PC-3 (cell line): ENCODE measurements at regions of chr1 and their contacts with region 1.

Region 1: DNA sequence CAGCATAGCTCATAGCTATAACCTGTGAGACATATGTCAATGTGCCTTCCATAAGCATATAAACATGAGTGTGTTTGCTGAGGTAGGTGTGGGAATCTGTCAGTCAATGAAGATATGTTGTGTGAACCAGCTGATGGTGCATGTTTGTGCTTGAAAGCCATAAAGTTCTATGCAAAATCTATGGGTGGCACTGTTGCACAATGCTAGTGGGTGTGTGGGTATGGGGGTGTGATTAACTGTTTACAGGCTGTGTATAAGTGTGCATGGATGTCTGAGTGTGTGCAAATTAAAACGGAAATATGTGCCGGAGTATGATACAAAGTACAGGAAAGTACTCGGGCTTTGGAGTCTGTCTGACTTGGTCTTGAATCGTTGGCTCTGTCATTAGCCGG is 1.0 kb upstream of the ATP2B4 start:
- DNase-seq: peak; percentile 73
- ATAC-seq: peak; percentile 44
- H3K4me3 ChIP-seq: no peak overlapping the region
- H3K27ac ChIP-seq: peak overlapping the region; percentile 61
- H3K4me1 ChIP-seq: peaks cover 27% of the 10 kb centered on the region
- H3K27me3 ChIP-seq: no peaks in the 10 kb centered on the region
- CTCF ChIP-seq: peak; percentile 64

Region 2: DNA sequence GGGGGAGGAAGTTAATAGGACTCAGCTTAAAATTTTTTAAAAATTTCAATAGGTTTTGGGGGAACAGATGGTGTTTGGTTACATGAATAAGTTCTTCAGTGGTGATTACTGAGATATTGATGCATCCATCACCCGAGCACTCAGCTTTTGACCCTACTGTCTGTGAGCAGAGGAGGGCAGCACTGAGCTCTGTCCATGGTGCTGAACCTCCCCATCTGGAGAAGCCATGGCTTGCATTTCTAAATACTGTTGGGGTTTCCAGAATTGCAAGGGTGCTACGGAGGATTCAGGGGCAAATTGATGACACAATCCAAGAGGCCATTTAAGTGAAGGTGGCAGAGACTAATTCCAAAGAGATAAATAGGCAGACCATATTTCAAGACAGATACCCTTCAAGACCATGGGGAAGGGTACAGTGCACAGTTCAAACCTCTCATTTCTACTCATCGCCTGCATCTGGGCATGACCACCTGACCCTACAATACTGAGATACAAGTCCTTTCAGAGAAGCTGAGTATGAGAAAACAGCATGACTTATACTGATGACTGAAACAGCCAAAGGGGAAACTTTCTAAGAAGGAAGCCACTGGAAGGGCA is 932.6 kb before region 1 on chr1:
- CTCF ChIA-PET with region 1: no interaction called
- POLR2A ChIA-PET with region 1: no interaction called
- intact Hi-C with region 1: no loop called
- DNase-seq: peak; percentile 61
- ATAC-seq: peak; percentile 68
- H3K4me3 ChIP-seq: no peak overlapping the region
- H3K27ac ChIP-seq: no peak overlapping the region
- H3K4me1 ChIP-seq: no peaks in the 10 kb centered on the region
- H3K27me3 ChIP-seq: peaks cover 23% of the 10 kb centered on the region; the same call in 1 of the 2 replicates
- CTCF ChIP-seq: no peak

Region 3: DNA sequence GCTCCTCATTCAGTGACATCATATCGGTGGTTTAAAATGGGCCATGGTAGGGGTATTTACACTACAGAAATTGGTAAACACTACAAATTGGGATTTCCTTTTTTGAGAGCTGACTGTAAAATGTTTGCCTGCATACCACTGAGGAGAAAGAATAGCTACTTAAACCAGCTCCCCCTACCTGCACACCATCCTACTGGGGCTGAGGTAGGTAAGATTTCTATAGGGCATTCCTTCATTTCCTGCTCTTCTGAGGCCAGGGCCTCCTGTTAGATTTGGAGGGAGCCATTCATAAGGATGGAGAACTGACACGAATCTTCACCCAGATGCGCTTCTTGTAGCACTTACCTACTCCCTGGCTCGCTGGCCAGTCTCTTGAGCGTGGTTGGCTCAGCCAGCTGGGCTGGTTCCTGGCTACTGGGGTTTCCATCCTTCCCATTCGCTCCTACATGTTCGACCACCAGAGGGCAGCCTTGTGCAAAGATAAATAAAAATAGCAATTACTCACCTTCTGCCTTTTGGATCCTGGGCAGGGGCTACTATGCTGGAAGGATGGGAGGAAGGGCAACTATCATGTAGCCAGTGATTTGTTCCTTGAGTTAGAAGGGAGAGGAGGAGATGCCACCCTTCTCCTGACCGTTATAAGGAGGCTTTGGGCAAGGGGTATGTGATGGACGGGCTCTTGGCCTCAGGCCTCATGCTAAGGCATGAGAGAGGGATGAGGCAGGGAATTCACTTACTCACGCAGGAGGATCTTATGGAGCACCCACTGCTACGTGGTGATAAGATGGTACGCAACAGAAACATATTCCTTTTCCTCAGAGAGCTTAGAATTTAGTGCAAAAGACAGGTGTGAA is 121.0 kb before region 1 on chr1:
- CTCF ChIA-PET with region 1: interaction called, 5 read pairs
- POLR2A ChIA-PET with region 1: no interaction called
- intact Hi-C with region 1: loop called (anchors 1 kb)
- DNase-seq: peak; percentile 94
- ATAC-seq: peak; percentile 91
- H3K4me3 ChIP-seq: peak overlapping the region; percentile 14; the same call in 1 of the 2 replicates
- H3K27ac ChIP-seq: no peak overlapping the region
- H3K4me1 ChIP-seq: peaks cover 20% of the 10 kb centered on the region; the same call in 1 of the 2 replicates
- H3K27me3 ChIP-seq: no peaks in the 10 kb centered on the region
- CTCF ChIP-seq: peak; percentile 96

Region 4: DNA sequence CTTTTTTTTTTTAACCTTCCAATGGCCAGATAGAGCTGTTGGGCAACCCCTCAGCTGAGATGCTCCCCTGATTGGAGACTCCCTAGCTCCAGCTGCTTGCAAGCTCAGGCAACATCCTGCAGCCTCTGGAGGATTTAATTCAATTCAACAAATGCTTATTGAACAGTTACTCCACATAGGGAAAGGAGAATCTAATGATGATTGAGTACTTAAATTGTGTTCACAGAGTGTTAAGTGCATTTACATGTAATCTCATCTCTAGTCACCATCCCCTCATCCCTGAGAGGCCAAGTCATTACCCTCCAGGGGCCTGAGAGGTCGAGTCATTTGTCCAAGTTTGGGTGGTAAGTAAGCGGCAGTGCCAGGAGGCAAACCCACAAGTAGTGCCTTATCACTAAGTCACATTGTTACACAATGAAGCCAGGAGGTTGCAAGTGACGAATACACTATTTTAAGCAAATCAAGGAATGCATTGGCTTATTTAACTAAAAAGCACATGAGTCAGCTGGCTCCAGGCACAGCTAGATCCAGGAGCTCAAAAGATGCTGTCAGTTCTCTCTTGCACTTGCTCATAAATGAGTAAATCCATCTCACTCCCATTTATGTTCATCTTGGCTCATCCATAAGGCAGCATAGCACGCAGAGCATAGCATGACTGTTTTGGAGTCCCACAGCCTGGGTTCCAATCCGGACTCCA is 67.4 kb before region 1 on chr1:
- CTCF ChIA-PET with region 1: no interaction called
- POLR2A ChIA-PET with region 1: interaction called, 4 read pairs
- intact Hi-C with region 1: loop called (anchors 1 kb)
- DNase-seq: peak; percentile 99
- ATAC-seq: peak; percentile 77
- H3K4me3 ChIP-seq: peak overlapping the region; percentile 27; the same call in 1 of the 2 replicates
- H3K27ac ChIP-seq: peak overlapping the region; percentile 97
- H3K4me1 ChIP-seq: peaks cover 49% of the 10 kb centered on the region
- H3K27me3 ChIP-seq: no peaks in the 10 kb centered on the region
- CTCF ChIP-seq: no peak

Region 5: GRCh38 chr1:203600782-203601736 is 24.6 kb before region 1 on chr1:
- CTCF ChIA-PET with region 1: interaction called, 5 read pairs
- POLR2A ChIA-PET with region 1: interaction called, 40 read pairs
- intact Hi-C with region 1: loop called (anchors 2 kb)
- DNase-seq: no peak
- ATAC-seq: no peak
- H3K4me3 ChIP-seq: no peak overlapping the region
- H3K27ac ChIP-seq: no peak overlapping the region
- H3K4me1 ChIP-seq: peaks cover 9% of the 10 kb centered on the region
- H3K27me3 ChIP-seq: no peaks in the 10 kb centered on the region
- CTCF ChIP-seq: no peak

Region 6: DNA sequence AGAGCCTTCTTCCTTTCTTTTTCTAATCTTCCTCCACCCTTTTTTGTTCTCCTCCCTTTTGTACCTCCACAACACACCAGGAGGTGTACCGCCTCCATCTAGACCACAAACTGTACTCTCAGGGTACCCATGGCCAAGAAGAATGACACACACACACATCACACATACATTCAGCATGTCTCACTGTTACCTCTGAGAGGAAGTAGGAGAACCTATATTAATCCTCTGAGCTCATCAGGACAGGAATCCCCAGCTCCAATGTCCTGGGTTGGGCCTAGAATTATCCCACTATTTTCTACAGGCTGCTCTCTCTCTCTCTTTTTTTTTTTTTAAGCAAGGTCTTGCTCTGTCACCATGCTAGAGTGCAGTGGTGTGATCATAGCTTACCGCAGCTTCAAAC is 37.7 kb after region 1 on chr1:
- CTCF ChIA-PET with region 1: interaction called, 4 read pairs
- POLR2A ChIA-PET with region 1: interaction called, 18 read pairs
- intact Hi-C with region 1: no loop called
- DNase-seq: peak; percentile 99
- ATAC-seq: peak; percentile 98
- H3K4me3 ChIP-seq: peak overlapping the region; percentile 31; the same call in 1 of the 2 replicates
- H3K27ac ChIP-seq: peak overlapping the region; percentile 95
- H3K4me1 ChIP-seq: peaks cover 36% of the 10 kb centered on the region
- H3K27me3 ChIP-seq: no peaks in the 10 kb centered on the region
- CTCF ChIP-seq: 0 out of 2 replicates have a peak, but pooled peaks have one; percentile 29

Region 7: GRCh38 chr1:203692565-203693470 is 67.2 kb after region 1 on chr1:
- CTCF ChIA-PET with region 1: interaction called, 9 read pairs
- POLR2A ChIA-PET with region 1: interaction called, 10 read pairs
- intact Hi-C with region 1: loop called (anchors 1 kb)
- DNase-seq: peak; percentile 93
- ATAC-seq: peak; percentile 87
- H3K4me3 ChIP-seq: no peak overlapping the region; the same call in 1 of the 2 replicates
- H3K27ac ChIP-seq: peak overlapping the region; percentile 99
- H3K4me1 ChIP-seq: peaks cover 26% of the 10 kb centered on the region
- H3K27me3 ChIP-seq: no peaks in the 10 kb centered on the region
- CTCF ChIP-seq: no peak

Region 8: DNA sequence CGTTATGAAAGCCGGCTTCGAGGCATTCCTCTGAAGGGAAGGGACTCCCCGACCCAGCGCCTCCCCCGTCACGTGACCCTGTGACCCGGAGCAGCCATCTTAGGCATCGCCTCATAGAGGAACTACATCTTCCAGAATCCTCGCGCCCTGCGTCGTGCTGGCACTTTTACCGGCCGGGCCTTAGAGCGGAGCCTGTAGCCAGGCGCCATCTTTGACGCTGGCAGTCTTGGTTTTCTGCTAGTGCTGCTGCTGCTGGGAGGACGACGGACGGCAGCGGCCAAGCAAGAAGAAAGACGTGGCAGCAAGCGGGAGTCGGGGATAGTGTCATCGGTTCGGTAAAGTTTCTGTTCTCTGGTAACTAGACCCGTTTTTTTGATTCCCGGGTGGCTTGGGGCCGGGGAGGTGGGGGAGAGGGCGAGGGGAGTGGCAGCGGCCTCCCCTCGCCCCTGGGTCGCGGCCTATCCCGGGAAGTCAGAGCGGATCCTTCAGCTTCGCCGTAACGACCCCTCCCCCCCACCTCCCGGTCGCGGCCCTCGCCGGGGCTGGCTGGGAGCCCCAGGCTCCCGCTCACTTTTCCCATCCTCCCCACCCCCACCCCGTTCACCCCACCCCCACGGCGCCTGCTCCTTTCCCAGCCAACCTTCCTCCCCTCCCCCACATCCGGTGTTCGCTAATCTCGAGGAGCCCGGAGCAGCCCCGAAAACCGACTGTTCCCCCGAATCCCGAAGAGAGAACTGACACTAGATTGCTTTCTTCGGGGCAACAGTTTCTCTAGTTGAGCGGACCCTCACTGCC is 170.0 kb after region 1 on chr1 and contains the starts of genes ZBED6 and ZC3H11A:
- CTCF ChIA-PET with region 1: no interaction called
- POLR2A ChIA-PET with region 1: no interaction called
- intact Hi-C with region 1: loop called (anchors 10 kb)
- DNase-seq: peak; percentile 99
- ATAC-seq: peak; percentile 96
- H3K4me3 ChIP-seq: peak within 1 kb of the TSS; percentile 89
- H3K27ac ChIP-seq: peak within 1 kb of the TSS; percentile 78
- H3K4me1 ChIP-seq: peaks cover 25% of the 10 kb centered on the region
- H3K27me3 ChIP-seq: no peaks in the 10 kb centered on the region
- CTCF ChIP-seq: no peak
- total RNA-seq, gene ZBED6: 12.9 and 13.1 TPM in 2 replicates
- total RNA-seq, gene ZC3H11A: 64.6 and 77.9 TPM in 2 replicates